CD4-positive, alpha-beta T cell (primary cell): ENCODE measurements at regions of chr13 and their contacts with region 1.

Region 1: DNA sequence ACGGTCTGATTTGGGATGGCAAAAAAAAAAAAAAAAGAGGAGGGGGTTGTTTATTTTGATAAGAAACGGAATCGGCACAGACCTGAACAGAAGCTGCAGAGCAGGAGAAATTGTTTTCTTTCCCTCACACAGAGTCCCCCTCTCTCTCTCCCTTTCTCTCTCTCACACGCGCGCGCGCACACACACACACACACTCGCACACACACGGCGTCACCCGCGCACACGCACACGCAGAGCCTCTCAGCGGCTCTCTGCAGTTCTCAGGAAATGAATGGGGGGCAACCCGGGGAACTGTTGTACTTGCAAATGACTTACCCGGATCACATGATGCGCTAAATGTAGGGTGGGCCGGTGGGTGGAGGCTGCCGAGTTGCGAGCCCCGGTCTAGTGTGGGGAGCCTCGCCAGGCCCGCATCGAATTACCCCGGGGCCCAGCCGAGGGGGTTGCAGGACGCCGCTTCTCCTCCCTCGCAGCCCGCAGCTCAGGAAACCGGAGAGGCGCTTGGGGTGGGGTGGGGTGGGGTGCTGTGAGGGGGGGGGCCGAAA is 475 bp downstream of the KLF12 start:
- DNase-seq: peak; percentile 77 to 97 (median 85)
- ATAC-seq: peak; percentile 55
- H3K4me3 ChIP-seq: peak overlapping the region; percentile 88
- H3K4me3 Mint-ChIP-seq: peak overlapping the region; percentile 100
- H3K27ac ChIP-seq: peak overlapping the region; percentile 86 to 90
- H3K27ac Mint-ChIP-seq: no peak overlapping the region
- H3K4me1 ChIP-seq: peaks cover 31% of the 10 kb centered on the region
- H3K4me1 Mint-ChIP-seq: peaks cover 42% of the 10 kb centered on the region
- H3K27me3 ChIP-seq: no peaks in the 10 kb centered on the region
- H3K27me3 Mint-ChIP-seq: peaks cover 6% of the 10 kb centered on the region
- CTCF ChIP-seq: no peak

Region 2: DNA sequence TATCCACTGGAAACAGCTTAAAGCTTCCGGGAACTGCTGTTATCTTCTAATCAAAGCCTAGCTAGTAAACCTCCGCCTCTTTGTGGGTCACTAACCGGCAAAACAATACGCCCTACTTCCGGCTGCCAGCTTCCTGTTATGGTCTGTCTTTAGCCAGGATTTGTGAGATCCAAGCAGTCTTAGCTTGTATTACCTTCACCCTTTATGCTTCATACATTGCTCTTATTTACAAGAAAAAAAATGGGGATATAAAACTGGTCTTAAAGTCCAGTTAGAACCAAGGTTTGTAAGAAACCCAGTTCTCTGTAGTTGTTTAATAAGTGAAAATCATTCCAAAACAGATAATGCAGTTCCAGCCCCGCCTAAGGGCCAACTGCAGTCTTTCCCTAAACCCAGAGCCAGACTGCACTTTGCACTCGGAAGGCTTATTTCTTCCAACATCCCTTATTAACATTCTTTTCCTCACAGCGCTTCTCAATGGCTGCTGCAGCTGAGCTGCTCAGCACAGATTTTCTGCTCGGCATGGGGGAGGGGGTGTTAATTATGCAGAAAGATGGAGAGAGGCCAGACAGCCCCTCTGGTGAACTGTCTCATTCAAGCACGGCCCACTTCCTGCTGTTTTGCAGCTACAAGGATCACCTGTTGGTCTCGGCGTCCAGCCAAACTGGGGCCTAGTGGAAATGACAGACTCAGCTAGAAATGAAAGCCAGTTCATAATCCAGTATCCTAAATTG is 367.9 kb before region 1 on chr13:
- CTCF ChIA-PET with region 1: interaction called, 3 read pairs
- POLR2A ChIA-PET with region 1: interaction called, 54 read pairs
- intact Hi-C with region 1: loop called in 1 of 2 experiments (anchors 5 kb)
- DNase-seq: peak; percentile 71 to 92 (median 89)
- ATAC-seq: peak; percentile 87
- H3K4me3 ChIP-seq: peak overlapping the region; percentile 33
- H3K4me3 Mint-ChIP-seq: peak overlapping the region; percentile 79
- H3K27ac ChIP-seq: peak overlapping the region; percentile 77 to 83
- H3K27ac Mint-ChIP-seq: peak overlapping the region; percentile 98
- H3K4me1 ChIP-seq: peaks cover 37% of the 10 kb centered on the region
- H3K4me1 Mint-ChIP-seq: peaks cover 82% of the 10 kb centered on the region
- H3K27me3 ChIP-seq: no peaks in the 10 kb centered on the region
- H3K27me3 Mint-ChIP-seq: no peaks in the 10 kb centered on the region
- CTCF ChIP-seq: no peak

Region 3: DNA sequence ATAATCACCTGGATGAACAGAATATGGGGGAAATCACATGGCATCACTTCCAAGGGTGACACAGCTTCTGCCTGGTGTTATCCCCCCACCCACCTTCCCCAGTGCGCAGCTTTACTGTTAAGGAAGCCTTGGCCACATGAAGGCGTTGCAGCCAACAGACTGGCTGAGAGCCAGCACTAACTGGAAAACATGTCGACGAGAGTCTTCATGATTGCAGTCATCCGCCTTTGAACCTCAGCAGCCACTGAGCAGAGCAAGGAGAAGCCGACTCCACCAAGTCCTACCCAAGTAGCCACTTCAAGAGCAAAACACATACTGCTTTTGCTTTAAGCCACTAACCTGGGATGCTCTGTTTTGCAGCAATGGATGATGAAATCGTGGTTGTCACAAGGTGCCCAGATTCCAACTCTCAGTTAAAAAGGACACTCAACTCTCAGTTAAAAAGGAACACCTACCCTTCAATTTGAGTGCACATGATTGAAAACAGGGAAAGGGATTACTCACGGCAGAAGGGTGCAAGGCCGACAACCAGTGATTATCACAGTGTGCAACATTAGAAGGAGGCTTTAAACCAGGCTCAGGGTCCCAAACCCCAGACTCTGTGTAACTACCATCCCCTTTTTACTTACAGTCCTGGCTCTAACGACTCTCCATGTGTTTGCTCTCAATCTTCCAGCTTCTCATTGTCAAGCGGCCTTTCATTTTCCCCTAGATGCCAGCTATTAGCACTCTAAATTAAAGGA is 148.6 kb before region 1 on chr13:
- CTCF ChIA-PET with region 1: interaction called, 3 read pairs
- POLR2A ChIA-PET with region 1: interaction called, 42 read pairs
- intact Hi-C with region 1: loop called (anchors 1 to 5 kb)
- DNase-seq: peak; percentile 64 to 94 (median 78)
- ATAC-seq: peak; percentile 90
- H3K4me3 ChIP-seq: peak overlapping the region; percentile 25
- H3K4me3 Mint-ChIP-seq: peak overlapping the region; percentile 85
- H3K27ac ChIP-seq: peak overlapping the region; percentile 42 to 61
- H3K27ac Mint-ChIP-seq: no peak overlapping the region
- H3K4me1 ChIP-seq: peaks cover 33% of the 10 kb centered on the region
- H3K4me1 Mint-ChIP-seq: peaks cover 50% of the 10 kb centered on the region
- H3K27me3 ChIP-seq: no peaks in the 10 kb centered on the region
- H3K27me3 Mint-ChIP-seq: no peaks in the 10 kb centered on the region
- CTCF ChIP-seq: no peak

Region 4: GRCh38 chr13:74062933-74063332 is 70.8 kb before region 1 on chr13:
- CTCF ChIA-PET with region 1: interaction called, 3 read pairs
- POLR2A ChIA-PET with region 1: interaction called, 34 read pairs
- intact Hi-C with region 1: loop called in 1 of 2 experiments (anchors 1 kb)
- DNase-seq: peak in 4 of 14 experiments; percentile 10 to 65 (median 34)
- ATAC-seq: peak; percentile 9
- H3K4me3 ChIP-seq: peak overlapping the region; percentile 24
- H3K4me3 Mint-ChIP-seq: peak overlapping the region; percentile 35
- H3K27ac ChIP-seq: peak overlapping the region; percentile 48 to 70
- H3K27ac Mint-ChIP-seq: peak overlapping the region; percentile 80
- H3K4me1 ChIP-seq: peaks cover 37% of the 10 kb centered on the region
- H3K4me1 Mint-ChIP-seq: peaks cover 89% of the 10 kb centered on the region
- H3K27me3 ChIP-seq: no peaks in the 10 kb centered on the region
- H3K27me3 Mint-ChIP-seq: no peaks in the 10 kb centered on the region
- CTCF ChIP-seq: no peak

Region 5: GRCh38 chr13:74111901-74112824 is 21.6 kb before region 1 on chr13:
- CTCF ChIA-PET with region 1: no interaction called
- POLR2A ChIA-PET with region 1: interaction called, 3 read pairs
- intact Hi-C with region 1: loop called (anchors 2 kb)
- DNase-seq: no peak
- ATAC-seq: no peak
- H3K4me3 ChIP-seq: no peak overlapping the region
- H3K4me3 Mint-ChIP-seq: no peak overlapping the region
- H3K27ac ChIP-seq: no peak overlapping the region
- H3K27ac Mint-ChIP-seq: peak overlapping the region; percentile 9
- H3K4me1 ChIP-seq: peaks cover 21% of the 10 kb centered on the region
- H3K4me1 Mint-ChIP-seq: peaks cover 85% of the 10 kb centered on the region
- H3K27me3 ChIP-seq: no peaks in the 10 kb centered on the region
- H3K27me3 Mint-ChIP-seq: no peaks in the 10 kb centered on the region
- CTCF ChIP-seq: no peak

Region 6: GRCh38 chr13:74230984-74231501 is 97.3 kb after region 1 on chr13:
- CTCF ChIA-PET with region 1: interaction called, 3 read pairs
- POLR2A ChIA-PET with region 1: interaction called, 37 read pairs
- intact Hi-C with region 1: loop called (anchors 5 kb)
- DNase-seq: peak in 4 of 14 experiments; percentile 14 to 79 (median 52)
- ATAC-seq: peak; percentile 88
- H3K4me3 ChIP-seq: peak overlapping the region; percentile 56
- H3K4me3 Mint-ChIP-seq: peak overlapping the region; percentile 79
- H3K27ac ChIP-seq: peak overlapping the region; percentile 15 to 38
- H3K27ac Mint-ChIP-seq: peak overlapping the region; percentile 90
- H3K4me1 ChIP-seq: peaks cover 17% of the 10 kb centered on the region
- H3K4me1 Mint-ChIP-seq: peaks cover 51% of the 10 kb centered on the region
- H3K27me3 ChIP-seq: no peaks in the 10 kb centered on the region
- H3K27me3 Mint-ChIP-seq: no peaks in the 10 kb centered on the region
- CTCF ChIP-seq: no peak

Region 7: DNA sequence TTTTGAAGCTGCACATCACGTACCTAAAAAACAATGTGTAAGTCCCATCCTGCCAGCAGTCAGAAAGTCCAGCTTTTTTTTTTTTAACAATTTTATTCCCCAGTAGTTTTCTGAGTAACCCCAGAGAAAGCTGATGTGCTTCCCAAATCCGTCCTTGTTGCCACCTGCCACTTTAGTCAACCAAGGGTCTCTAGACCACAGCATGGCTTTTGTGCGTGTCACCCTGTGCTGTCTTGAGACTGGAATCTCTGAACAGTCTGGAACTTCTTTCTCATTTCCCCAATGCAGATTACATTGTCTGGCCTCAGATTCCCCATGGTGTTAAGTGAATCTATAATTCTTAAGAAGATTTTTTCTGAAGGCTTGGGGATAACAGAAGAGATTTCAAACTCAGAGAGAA is 289.7 kb after region 1 on chr13:
- CTCF ChIA-PET with region 1: no interaction called
- POLR2A ChIA-PET with region 1: no interaction called
- intact Hi-C with region 1: no loop called
- DNase-seq: no peak
- ATAC-seq: no peak
- H3K4me3 ChIP-seq: no peak overlapping the region
- H3K4me3 Mint-ChIP-seq: no peak overlapping the region
- H3K27ac ChIP-seq: no peak overlapping the region
- H3K27ac Mint-ChIP-seq: no peak overlapping the region
- H3K4me1 ChIP-seq: no peaks in the 10 kb centered on the region
- H3K4me1 Mint-ChIP-seq: no peaks in the 10 kb centered on the region
- H3K27me3 ChIP-seq: no peaks in the 10 kb centered on the region
- H3K27me3 Mint-ChIP-seq: no peaks in the 10 kb centered on the region
- CTCF ChIP-seq: no peak

Region 8: GRCh38 chr13:75326173-75327134 is 1192.7 kb after region 1 on chr13:
- CTCF ChIA-PET with region 1: no interaction called
- POLR2A ChIA-PET with region 1: interaction called, 3 read pairs
- intact Hi-C with region 1: loop called in 1 of 2 experiments (anchors 2 kb)
- DNase-seq: peak; percentile 12 to 92 (median 40)
- ATAC-seq: peak; percentile 86
- H3K4me3 ChIP-seq: peak overlapping the region; percentile 75
- H3K4me3 Mint-ChIP-seq: peak overlapping the region; percentile 92
- H3K27ac ChIP-seq: peak overlapping the region; percentile 89 to 93
- H3K27ac Mint-ChIP-seq: peak overlapping the region; percentile 93
- H3K4me1 ChIP-seq: peaks cover 5% of the 10 kb centered on the region
- H3K4me1 Mint-ChIP-seq: peaks cover 57% of the 10 kb centered on the region
- H3K27me3 ChIP-seq: no peaks in the 10 kb centered on the region
- H3K27me3 Mint-ChIP-seq: no peaks in the 10 kb centered on the region
- CTCF ChIP-seq: no peak